Activated CD4-positive, alpha-beta memory T cell treated with anti-CD3 and anti-CD28 coated beads for 36 hours (primary cell): ENCODE measurements at regions of chr5 and their contacts with region 1.

Region 1: GRCh38 chr5:139968547-139969261 is 74.4 kb downstream of the NRG2 start:
- DNase-seq: peak; percentile 92
- H3K4me3 Mint-ChIP-seq: no peak overlapping the region
- H3K27ac Mint-ChIP-seq: no peak overlapping the region
- H3K4me1 Mint-ChIP-seq: no peaks in the 10 kb centered on the region
- H3K27me3 Mint-ChIP-seq: peaks cover 4% of the 10 kb centered on the region

Region 2: DNA sequence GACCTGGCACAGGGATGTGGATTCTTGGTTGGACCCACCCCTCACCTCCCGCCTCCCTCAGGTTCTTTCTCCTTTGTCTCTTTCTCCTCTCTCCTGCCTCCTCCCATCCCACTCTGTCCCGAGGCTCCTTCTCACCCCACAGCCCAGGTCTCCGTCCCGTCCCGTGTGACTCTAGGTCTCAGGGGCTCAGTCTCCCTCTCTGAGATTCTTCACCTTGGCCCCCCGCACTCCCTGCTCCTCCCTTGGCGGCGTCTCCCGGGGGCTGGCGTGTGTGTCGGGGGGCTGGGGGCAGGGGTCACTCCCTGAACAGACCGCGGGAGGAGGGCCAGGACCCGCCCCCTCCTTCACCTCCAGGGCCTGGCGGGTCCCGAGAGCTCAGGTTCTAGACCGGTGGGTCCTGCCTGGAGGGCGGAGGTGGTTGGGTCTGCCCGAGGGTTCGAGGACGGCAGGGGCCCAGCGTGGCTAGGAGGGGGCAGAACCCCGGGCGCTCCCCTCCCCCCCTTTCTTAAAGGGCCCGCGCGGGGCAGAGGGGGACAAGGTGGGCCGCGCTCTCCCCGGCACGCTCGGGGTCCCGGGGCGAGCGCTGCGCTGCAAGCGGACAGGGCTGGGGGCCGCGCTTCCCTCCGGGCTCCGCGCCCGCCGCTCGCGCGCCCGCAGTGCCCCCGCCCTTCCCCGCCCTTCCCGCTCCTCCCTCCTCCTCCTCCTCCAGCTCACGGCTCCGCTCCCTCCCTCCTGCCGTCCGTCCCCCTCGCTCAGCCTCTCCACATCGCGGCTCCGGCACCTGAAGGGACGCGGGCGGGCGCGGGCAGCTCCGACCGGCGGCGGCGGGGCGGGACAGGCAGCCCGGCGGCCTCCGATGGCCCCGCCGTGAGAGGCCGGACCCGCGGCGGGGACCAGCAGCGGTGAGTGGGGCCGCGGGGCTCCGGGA is 173.4 kb before region 1 on chr5 and contains the start of gene PSD2:
- CTCF ChIA-PET with region 1: interaction called, 296 read pairs
- POLR2A ChIA-PET with region 1: no interaction called
- intact Hi-C with region 1: no loop called
- DNase-seq: peak; percentile 36
- H3K4me3 Mint-ChIP-seq: no peak within 1 kb of the TSS
- H3K27ac Mint-ChIP-seq: no peak within 1 kb of the TSS
- H3K4me1 Mint-ChIP-seq: no peaks in the 10 kb centered on the region
- H3K27me3 Mint-ChIP-seq: peaks cover 40% of the 10 kb centered on the region
- total RNA-seq, gene PSD2: not detected

Region 3: GRCh38 chr5:139882961-139883539 is 85.7 kb before region 1 on chr5:
- CTCF ChIA-PET with region 1: interaction called, 12 read pairs
- POLR2A ChIA-PET with region 1: no interaction called
- intact Hi-C with region 1: loop called (anchors 5 kb)
- DNase-seq: no peak
- H3K4me3 Mint-ChIP-seq: no peak overlapping the region
- H3K27ac Mint-ChIP-seq: no peak overlapping the region
- H3K4me1 Mint-ChIP-seq: no peaks in the 10 kb centered on the region
- H3K27me3 Mint-ChIP-seq: peaks cover 2% of the 10 kb centered on the region

Region 4: GRCh38 chr5:139914218-139914807 is 54.4 kb before region 1 on chr5:
- CTCF ChIA-PET with region 1: interaction called, 15 read pairs
- POLR2A ChIA-PET with region 1: no interaction called
- intact Hi-C with region 1: no loop called
- DNase-seq: no peak
- H3K4me3 Mint-ChIP-seq: no peak overlapping the region
- H3K27ac Mint-ChIP-seq: no peak overlapping the region
- H3K4me1 Mint-ChIP-seq: no peaks in the 10 kb centered on the region
- H3K27me3 Mint-ChIP-seq: peaks cover 10% of the 10 kb centered on the region

Region 5: DNA sequence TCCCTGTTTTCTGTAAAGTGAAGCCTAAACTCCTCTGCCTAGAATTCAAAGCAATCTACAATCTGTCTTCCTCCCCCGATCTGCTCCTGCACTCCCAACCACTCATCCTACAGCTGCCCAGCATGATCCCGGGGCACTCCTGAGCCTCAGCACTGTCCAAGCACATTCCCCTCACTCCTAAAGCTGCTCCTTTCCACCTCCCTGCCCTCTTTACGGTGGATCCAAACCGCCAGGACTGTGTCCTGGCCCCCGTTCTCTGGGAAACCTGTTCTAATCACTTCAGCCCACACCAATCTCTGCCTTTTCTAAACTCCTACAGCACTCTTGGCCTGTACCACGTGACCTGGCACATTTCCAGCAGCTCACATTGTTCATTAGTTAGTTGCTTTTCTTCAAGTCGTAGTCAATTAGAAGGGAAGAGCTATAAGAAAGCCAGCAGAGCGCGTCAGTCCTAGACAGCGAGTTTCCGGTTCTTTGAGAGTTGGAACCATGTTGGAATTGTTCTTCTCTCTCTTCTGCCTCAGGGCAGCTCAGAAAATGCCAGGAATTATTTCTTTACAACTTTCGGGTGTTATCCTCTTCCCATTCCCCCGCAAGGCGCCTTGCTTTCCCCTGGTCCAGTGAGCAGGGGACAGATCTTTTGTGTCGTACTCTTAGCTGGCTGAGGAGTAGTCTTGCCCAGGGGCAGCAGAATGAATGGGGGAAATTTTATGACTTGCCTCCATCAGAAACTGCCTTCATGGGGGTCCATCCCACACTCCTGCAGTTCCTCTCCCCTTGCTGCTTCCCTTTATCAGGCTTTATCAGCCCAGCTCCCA is 13.7 kb after region 1 on chr5:
- CTCF ChIA-PET with region 1: interaction called, 34 read pairs
- POLR2A ChIA-PET with region 1: no interaction called
- intact Hi-C with region 1: no loop called
- DNase-seq: no peak
- H3K4me3 Mint-ChIP-seq: no peak overlapping the region
- H3K27ac Mint-ChIP-seq: no peak overlapping the region
- H3K4me1 Mint-ChIP-seq: no peaks in the 10 kb centered on the region
- H3K27me3 Mint-ChIP-seq: peaks cover 18% of the 10 kb centered on the region

Region 6: DNA sequence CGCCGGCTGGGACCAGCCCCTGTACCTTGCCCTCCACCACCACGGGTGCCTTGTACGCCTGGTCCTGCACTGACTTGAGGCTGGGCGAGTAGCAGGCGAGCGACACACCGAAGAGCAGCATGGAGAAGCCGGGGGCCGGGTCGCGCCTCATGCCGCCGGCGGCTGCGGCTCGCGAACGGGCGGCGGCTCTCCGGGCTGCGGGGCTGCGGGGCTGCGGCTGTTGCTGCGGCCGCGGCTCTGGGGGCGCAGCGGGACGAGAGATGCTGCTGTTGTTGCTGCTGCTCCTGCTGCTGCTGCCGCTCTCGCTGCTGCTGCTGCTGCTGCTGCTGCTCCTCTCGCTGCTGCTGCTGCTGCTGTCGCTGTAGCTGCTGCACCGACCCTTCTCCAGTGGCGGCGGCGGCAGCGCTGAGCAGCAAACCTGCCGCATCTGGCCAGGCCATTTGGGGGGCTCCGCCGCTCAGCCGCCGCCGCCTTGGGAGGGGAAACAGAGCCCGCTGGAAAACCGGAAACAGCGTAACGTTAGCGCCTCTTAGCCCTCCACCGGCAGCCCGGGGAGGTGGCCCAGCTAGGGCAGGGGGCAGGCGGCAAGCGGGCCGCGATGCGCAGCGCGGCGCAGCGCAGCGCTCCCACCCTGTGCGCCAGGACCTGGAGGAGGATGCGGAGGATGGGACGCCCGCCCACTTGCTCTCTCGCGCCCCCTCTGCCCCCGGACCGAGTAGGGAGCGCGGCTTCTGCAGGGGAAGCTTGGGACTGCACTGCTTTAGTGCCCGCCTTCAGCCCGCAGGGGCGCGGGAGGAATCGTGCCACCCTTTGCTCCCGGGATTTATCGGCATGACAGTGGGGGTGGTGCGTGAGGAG is 74.2 kb after region 1 on chr5 and contains the start of gene NRG2:
- CTCF ChIA-PET with region 1: interaction called, 15 read pairs
- POLR2A ChIA-PET with region 1: no interaction called
- intact Hi-C with region 1: no loop called
- DNase-seq: peak; percentile 55
- H3K4me3 Mint-ChIP-seq: peak within 1 kb of the TSS; percentile 70
- H3K27ac Mint-ChIP-seq: no peak within 1 kb of the TSS
- H3K4me1 Mint-ChIP-seq: peaks cover 20% of the 10 kb centered on the region
- H3K27me3 Mint-ChIP-seq: peaks cover 47% of the 10 kb centered on the region
- total RNA-seq, gene NRG2: not detected